IMR-90 (cell line): ENCODE measurements at regions of chr4 and their contacts with region 1.

Region 1: GRCh38 chr4:75584067-75584466 is 28.2 kb downstream of the ODAPH start:
- DNase-seq: no peak
- ATAC-seq: no peak
- H3K4me3 ChIP-seq: no peak overlapping the region
- H3K27ac ChIP-seq: no peak overlapping the region
- H3K4me1 ChIP-seq: no peaks in the 10 kb centered on the region
- H3K27me3 ChIP-seq: peaks cover 7% of the 10 kb centered on the region
- CTCF ChIP-seq: no peak
- POLR2A ChIP-seq: no peak
- RAD21 ChIP-seq: no peak

Region 2: GRCh38 chr4:75849461-75849860 is 265.4 kb after region 1 on chr4:
- CTCF ChIA-PET with region 1: interaction called, 6 read pairs
- POLR2A ChIA-PET with region 1: no interaction called
- dilution Hi-C with region 1: no loop called
- in situ Hi-C with region 1: loop called (anchors 5 kb)
- intact Hi-C with region 1: no loop called
- DNase-seq: no peak
- ATAC-seq: no peak
- H3K4me3 ChIP-seq: no peak overlapping the region
- H3K27ac ChIP-seq: no peak overlapping the region
- H3K4me1 ChIP-seq: peaks cover 10% of the 10 kb centered on the region
- H3K27me3 ChIP-seq: peaks cover 7% of the 10 kb centered on the region
- CTCF ChIP-seq: no peak
- POLR2A ChIP-seq: no peak
- RAD21 ChIP-seq: no peak